Natural killer cell (primary cell): ENCODE measurements at regions of chr15 and their contacts with region 1.

Region 1: GRCh38 chr15:40108855-40109735 is at the start of gene BMF:
- DNase-seq: peak; percentile 96 to 97
- ATAC-seq: peak; percentile 89 to 94 (median 93)
- H3K4me3 ChIP-seq: peak within 1 kb of the TSS; percentile 71
- H3K4me3 Mint-ChIP-seq: peak within 1 kb of the TSS; percentile 95
- H3K27ac ChIP-seq: peak within 1 kb of the TSS; percentile 37
- H3K27ac Mint-ChIP-seq: peak within 1 kb of the TSS; percentile 46 to 88
- H3K4me1 ChIP-seq: peaks cover 50% of the 10 kb centered on the region
- H3K4me1 Mint-ChIP-seq: peaks cover 26 to 37% of the 10 kb centered on the region in 2 donors
- H3K27me3 ChIP-seq: no peaks in the 10 kb centered on the region
- H3K27me3 Mint-ChIP-seq: peaks cover 13 to 16% of the 10 kb centered on the region in 2 donors
- CTCF ChIP-seq: no peak
- total RNA-seq, gene BMF: 7.6 to 10.5 (median 9.8) TPM

Region 2: GRCh38 chr15:40044717-40045571 is 64.2 kb before region 1 on chr15:
- intact Hi-C with region 1: loop called (anchors 5 kb)
- DNase-seq: peak; percentile 75 to 90
- ATAC-seq: peak; percentile 91 to 97 (median 94)
- H3K4me3 ChIP-seq: no peak overlapping the region
- H3K4me3 Mint-ChIP-seq: peak overlapping the region; percentile 45
- H3K27ac ChIP-seq: no peak overlapping the region
- H3K27ac Mint-ChIP-seq: peak overlapping the region; percentile 60 to 83
- H3K4me1 ChIP-seq: peaks cover 43% of the 10 kb centered on the region
- H3K4me1 Mint-ChIP-seq: peaks cover 29 to 46% of the 10 kb centered on the region in 2 donors
- H3K27me3 ChIP-seq: no peaks in the 10 kb centered on the region
- H3K27me3 Mint-ChIP-seq: no peaks in the 10 kb centered on the region
- CTCF ChIP-seq: peak; percentile 78

Region 3: DNA sequence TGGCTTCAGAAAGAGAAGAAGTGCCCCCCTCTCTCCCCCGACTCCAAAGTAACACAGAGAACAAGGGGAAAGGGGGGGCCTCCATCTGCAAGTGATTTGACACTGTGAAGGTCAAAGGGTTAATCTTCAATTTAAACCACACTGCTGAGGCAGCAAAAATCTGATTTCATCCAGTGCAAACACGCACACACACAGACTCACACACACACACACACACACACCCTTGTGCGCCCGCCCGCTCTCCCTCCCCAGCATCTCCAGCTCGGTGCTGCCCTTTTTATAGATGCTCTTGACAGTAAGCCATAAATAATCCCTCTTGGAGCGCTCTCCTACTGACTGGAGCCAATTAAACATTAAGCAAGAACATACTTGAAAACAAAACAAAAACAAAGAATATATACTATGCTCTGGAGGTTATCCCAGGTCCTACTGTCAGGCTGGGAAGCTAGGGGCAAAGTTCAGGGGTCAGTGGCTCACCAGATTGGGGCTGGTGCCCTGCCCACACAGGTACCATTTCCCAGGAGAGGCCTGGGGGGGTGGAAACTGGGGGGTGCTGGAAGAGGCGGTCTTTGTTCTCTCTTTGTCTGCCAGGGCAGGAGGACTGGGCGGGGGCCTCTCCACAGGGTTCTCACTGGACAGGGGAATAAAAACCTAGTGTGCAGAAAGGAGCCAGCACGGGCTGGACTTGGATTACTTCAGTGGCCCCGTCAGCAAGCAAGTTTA is 16.7 kb before region 1 on chr15:
- intact Hi-C with region 1: no loop called
- DNase-seq: no peak
- ATAC-seq: no peak
- H3K4me3 ChIP-seq: no peak overlapping the region
- H3K4me3 Mint-ChIP-seq: no peak overlapping the region
- H3K27ac ChIP-seq: peak overlapping the region; percentile 52
- H3K27ac Mint-ChIP-seq: no peak overlapping the region
- H3K4me1 ChIP-seq: peaks cover 29% of the 10 kb centered on the region
- H3K4me1 Mint-ChIP-seq: no peaks in the 10 kb centered on the region
- H3K27me3 ChIP-seq: no peaks in the 10 kb centered on the region
- H3K27me3 Mint-ChIP-seq: no peaks in the 10 kb centered on the region
- CTCF ChIP-seq: no peak

Region 4: DNA sequence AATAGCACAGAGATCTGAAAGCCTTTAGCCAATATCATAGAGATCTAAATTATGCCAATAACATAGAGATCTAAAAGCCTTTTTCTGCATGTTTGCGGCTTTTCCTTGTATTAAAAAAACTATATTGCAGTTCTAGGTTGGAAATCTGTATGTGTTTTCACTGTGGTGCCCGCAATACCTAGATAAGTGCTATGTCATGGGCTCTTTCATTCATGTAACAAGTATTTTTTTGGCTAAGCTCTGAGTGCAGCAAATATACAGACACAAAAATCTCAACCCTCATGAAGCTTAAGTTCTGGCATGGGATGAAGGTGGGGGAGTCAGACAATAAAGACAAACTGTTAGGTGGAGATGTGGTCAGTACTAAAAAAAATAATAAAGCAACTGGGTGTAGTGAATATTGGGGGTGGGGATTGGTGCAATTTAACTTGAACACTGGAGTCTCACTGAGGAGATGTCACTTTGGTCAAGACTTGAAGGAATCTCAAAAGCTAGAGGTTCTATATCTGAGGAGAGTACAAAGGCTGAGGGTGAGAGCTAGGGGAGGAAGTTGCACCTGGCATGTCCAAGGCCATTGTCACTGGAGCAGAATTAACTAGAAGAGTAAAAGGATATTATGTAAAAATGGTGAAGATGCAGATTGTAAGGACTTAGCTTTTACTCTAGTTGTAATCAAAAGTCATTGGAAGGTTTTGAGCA is 52.7 kb after region 1 on chr15:
- intact Hi-C with region 1: no loop called
- DNase-seq: no peak
- ATAC-seq: no peak
- H3K4me3 ChIP-seq: no peak overlapping the region
- H3K4me3 Mint-ChIP-seq: no peak overlapping the region
- H3K27ac ChIP-seq: no peak overlapping the region
- H3K27ac Mint-ChIP-seq: no peak overlapping the region
- H3K4me1 ChIP-seq: peaks cover 12% of the 10 kb centered on the region
- H3K4me1 Mint-ChIP-seq: no peaks in the 10 kb centered on the region
- H3K27me3 ChIP-seq: no peaks in the 10 kb centered on the region
- H3K27me3 Mint-ChIP-seq: no peaks in the 10 kb centered on the region
- CTCF ChIP-seq: no peak